ENCODE measurements at regions of chr16 and their contacts with region 1.

Region 1: DNA sequence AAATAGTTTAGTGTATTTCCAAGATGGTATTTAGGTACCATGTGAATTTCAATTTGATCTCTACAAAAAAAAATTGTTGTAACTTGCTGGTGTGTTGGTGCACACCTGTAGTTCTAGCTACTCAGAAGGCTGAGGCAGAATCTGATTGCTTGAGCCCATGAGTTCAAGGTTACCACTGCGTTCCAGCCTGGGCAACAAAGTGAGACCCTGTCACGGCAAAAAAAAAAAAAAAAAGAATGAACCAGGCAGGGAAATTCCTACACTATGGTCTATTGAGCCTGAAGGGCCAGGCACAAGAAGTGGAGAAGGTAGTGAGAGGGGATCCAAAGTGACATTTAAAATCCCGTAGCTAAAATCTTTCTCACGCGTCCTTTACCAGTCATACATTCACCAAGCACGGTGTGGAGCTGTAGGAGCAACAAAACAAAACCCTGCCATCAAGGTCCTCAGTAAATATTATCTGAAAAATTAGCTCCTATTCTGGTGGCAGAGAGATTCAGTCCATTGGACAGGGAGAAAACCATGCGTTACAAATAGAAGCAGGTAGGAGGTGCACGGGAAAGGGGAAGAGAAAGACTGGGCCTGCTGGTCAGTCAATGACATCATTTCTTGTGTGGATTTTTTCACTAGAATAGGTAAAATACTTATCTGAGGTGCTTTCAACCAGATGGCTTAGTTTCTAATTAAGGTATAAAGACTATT is 27.3 kb downstream of the TXNDC11 start:
- DNase-seq: peak; percentile 39
- H3K4me3 ChIP-seq: no peak overlapping the region
- H3K27ac ChIP-seq: peak overlapping the region; percentile 54
- H3K4me1 ChIP-seq: peaks cover 77% of the 10 kb centered on the region
- CTCF ChIP-seq: peak; percentile 25; the same call in 1 of the 2 replicates

Region 2: DNA sequence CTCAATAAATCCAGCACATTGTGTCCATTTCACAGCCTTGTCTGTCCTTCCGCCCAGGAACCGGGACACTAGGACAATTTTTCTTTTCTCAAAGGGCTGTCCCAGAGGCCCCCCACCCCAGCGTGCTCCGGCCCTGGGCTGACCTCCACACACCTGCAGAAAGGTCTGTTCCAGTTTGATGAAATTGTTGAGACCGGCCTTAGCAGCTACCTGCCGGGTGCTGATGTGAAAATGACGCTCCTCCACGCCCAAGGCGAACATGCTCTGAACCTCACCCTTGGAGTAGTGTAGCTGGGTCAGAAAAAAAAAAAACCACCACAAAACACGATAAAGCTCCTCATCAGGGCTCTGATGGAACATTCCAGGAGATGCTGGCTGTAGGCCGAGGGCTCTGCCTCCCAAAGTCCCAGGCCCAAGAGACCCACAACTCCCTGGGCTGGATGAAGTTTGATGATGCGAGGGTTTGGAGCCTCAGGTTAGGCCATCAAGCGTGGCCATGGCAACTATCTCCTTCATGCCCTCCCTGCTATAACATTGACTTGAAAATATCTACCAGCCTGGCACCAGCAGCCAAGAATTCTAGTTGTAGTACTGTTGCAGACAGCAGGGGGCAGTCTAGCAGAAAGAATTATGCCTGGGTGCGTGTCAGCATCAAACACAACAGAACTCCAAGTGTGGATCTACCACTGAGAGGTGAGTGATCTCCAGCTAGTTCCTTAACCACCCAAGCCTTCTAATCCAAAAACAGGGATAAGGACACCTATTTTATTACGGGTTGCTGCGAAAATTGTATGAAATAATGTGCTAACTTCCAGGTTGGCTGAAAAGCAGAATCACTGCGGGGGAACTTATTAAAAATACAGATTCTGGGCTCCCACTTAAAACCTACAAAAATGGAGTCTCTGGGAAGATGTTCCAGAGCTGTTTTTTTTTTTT is 308.1 kb before region 1 on chr16:
- CTCF ChIA-PET with region 1: no interaction called
- POLR2A ChIA-PET with region 1: no interaction called
- intact Hi-C with region 1: loop called (anchors 2 kb)
- DNase-seq: peak; percentile 79
- H3K4me3 ChIP-seq: no peak overlapping the region
- H3K27ac ChIP-seq: no peak overlapping the region
- H3K4me1 ChIP-seq: peaks cover 5% of the 10 kb centered on the region
- CTCF ChIP-seq: peak; percentile 96

Region 3: GRCh38 chr16:11535471-11535870 is 179.9 kb before region 1 on chr16:
- CTCF ChIA-PET with region 1: no interaction called
- POLR2A ChIA-PET with region 1: no interaction called
- intact Hi-C with region 1: loop called (anchors 1 kb)
- DNase-seq: no peak
- H3K4me3 ChIP-seq: no peak overlapping the region
- H3K27ac ChIP-seq: no peak overlapping the region
- H3K4me1 ChIP-seq: peaks cover 7% of the 10 kb centered on the region
- CTCF ChIP-seq: no peak

Region 4: GRCh38 chr16:11639925-11640899 is 75.2 kb before region 1 on chr16:
- CTCF ChIA-PET with region 1: no interaction called
- POLR2A ChIA-PET with region 1: no interaction called
- intact Hi-C with region 1: loop called (anchors 2 kb)
- DNase-seq: no peak
- H3K4me3 ChIP-seq: no peak overlapping the region
- H3K27ac ChIP-seq: no peak overlapping the region
- H3K4me1 ChIP-seq: peaks cover 34% of the 10 kb centered on the region
- CTCF ChIP-seq: no peak

Region 5: GRCh38 chr16:11689031-11689761 is 26.2 kb before region 1 on chr16:
- CTCF ChIA-PET with region 1: interaction called, 3 read pairs
- POLR2A ChIA-PET with region 1: interaction called, 14 read pairs
- intact Hi-C with region 1: loop called (anchors 2 kb)
- DNase-seq: peak; percentile 91
- H3K4me3 ChIP-seq: peak overlapping the region; percentile 65
- H3K27ac ChIP-seq: peak overlapping the region; percentile 98
- H3K4me1 ChIP-seq: peaks cover 80% of the 10 kb centered on the region
- CTCF ChIP-seq: no peak

Region 6: DNA sequence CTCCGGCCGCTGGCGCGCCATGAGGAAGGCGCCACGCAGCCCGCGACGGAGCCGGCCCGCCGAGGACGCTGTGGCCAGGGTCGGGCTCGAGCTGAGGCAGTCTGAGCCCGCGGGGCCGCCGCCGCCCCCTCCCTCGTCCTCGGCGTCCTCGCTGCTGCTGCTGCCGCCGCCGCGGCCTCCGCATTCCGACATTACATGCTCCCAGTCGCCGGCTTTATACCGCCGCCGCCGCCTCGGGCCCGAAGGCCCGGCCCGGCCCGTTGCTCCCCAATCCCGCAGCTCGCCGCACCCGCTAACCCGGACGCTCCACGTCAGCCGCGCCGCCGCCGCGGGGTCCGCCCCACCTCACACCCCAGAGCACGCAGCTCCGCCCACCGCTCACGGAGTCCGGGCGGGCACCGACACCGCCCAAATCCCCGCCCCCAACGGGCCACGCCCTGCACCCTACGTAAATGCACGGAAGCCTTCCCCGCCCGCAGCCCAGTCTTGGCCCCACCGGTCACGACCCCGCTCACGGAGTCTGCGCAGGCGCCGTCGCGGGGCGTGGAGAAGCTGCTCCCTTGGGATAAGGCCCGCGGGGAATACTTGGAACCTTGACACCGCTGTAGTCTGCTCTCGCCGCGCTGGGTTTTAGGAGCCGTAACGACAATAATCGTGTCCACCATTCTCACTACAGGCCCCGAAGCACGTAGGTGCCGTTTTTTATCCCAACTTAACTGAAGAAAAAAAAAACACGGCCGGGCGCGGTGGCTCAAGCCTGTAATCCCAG is 27.3 kb after region 1 on chr16 and contains the start of gene TXNDC11:
- CTCF ChIA-PET with region 1: no interaction called
- POLR2A ChIA-PET with region 1: interaction called, 4 read pairs
- intact Hi-C with region 1: loop called (anchors 2 kb)
- DNase-seq: peak; percentile 98
- H3K4me3 ChIP-seq: peak within 1 kb of the TSS; percentile 97
- H3K27ac ChIP-seq: peak within 1 kb of the TSS; percentile 67
- H3K4me1 ChIP-seq: peaks cover 48% of the 10 kb centered on the region
- CTCF ChIP-seq: no peak
- total RNA-seq, gene TXNDC11: 79.8 and 96.0 TPM in 2 replicates

Region 7: GRCh38 chr16:11816103-11816502 is 100.7 kb after region 1 on chr16:
- CTCF ChIA-PET with region 1: no interaction called
- POLR2A ChIA-PET with region 1: interaction called, 3 read pairs
- intact Hi-C with region 1: loop called (anchors 2 kb)
- DNase-seq: no peak
- H3K4me3 ChIP-seq: no peak overlapping the region
- H3K27ac ChIP-seq: no peak overlapping the region
- H3K4me1 ChIP-seq: peaks cover 11% of the 10 kb centered on the region
- CTCF ChIP-seq: no peak

Region 8: GRCh38 chr16:12067714-12068401 is 352.5 kb after region 1 on chr16:
- CTCF ChIA-PET with region 1: no interaction called
- POLR2A ChIA-PET with region 1: no interaction called
- intact Hi-C with region 1: no loop called
- DNase-seq: peak; percentile 82
- H3K4me3 ChIP-seq: no peak overlapping the region
- H3K27ac ChIP-seq: no peak overlapping the region
- H3K4me1 ChIP-seq: no peaks in the 10 kb centered on the region
- CTCF ChIP-seq: peak; percentile 97

Measured in OCI-LY7 (cell line).